ENCODE measurements at regions of chr6 and their contacts with region 1.

Region 1: GRCh38 chr6:148780918-148781436 is 34.1 kb downstream of the UST start:
- DNase-seq: peak; percentile 49
- H3K4me3 Mint-ChIP-seq: peak overlapping the region; percentile 52
- H3K27ac Mint-ChIP-seq: peak overlapping the region; percentile 78
- H3K4me1 Mint-ChIP-seq: peaks cover 36% of the 10 kb centered on the region
- H3K27me3 Mint-ChIP-seq: no peaks in the 10 kb centered on the region

Region 2: DNA sequence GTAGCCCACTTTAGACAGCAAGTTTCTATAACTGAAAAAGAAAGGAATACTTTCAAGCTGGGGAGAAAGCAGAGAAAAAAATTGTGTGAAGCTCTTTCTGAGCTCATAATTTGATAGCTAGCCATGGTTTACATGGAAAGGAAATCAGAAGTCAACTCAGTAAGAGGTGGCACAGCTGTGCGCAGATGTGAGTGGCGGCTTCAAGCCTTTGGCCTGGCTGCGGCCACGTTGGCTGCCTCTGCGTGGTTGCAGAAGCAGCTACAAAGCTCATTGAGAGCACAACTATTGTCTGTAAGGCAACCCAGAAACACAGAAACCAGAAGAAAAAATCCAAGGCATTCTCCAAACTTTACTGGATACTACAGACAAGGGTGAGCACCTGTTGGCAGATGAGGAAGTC is 301.5 kb before region 1 on chr6:
- CTCF ChIA-PET with region 1: no interaction called
- POLR2A ChIA-PET with region 1: no interaction called
- intact Hi-C with region 1: no loop called
- DNase-seq: no peak
- H3K4me3 Mint-ChIP-seq: no peak overlapping the region
- H3K27ac Mint-ChIP-seq: no peak overlapping the region
- H3K4me1 Mint-ChIP-seq: no peaks in the 10 kb centered on the region
- H3K27me3 Mint-ChIP-seq: peaks cover 5% of the 10 kb centered on the region

Region 3: DNA sequence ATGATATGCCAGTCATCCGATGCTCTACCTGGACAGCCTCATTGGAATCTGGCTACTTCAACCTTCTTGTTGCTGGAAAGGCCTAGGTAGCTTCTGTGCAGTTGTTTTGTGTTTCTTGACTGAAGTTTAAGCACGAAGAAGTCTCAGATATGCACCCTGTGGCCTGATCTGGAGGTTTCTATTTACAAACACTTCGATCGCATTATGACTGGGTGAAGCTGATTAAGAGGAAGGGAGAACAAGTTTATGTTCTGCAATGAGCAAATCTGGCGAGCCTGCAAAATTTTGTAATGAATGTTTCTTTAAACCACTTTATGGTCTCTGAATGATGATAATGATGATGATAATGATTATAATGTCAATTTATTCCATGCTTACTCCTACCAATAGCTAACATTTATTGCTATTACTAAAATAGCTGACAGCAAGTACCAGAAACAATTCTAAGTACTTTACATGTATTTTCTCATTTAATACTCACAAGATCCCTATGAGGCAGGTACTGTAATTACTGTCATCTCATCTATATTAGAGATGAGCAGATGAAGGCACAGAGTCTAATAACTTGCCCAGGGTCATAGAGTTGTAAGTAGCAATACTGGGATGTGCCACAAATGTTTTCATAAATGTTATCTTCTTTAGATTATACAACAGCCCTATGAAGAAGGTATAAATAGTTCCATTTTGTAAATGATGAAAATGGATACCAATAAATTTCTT is 160.2 kb before region 1 on chr6:
- CTCF ChIA-PET with region 1: no interaction called
- POLR2A ChIA-PET with region 1: no interaction called
- intact Hi-C with region 1: no loop called
- DNase-seq: peak; percentile 9
- H3K4me3 Mint-ChIP-seq: no peak overlapping the region
- H3K27ac Mint-ChIP-seq: no peak overlapping the region
- H3K4me1 Mint-ChIP-seq: no peaks in the 10 kb centered on the region
- H3K27me3 Mint-ChIP-seq: peaks cover 9% of the 10 kb centered on the region

Region 4: GRCh38 chr6:148711833-148712654 is 68.9 kb before region 1 on chr6:
- CTCF ChIA-PET with region 1: no interaction called
- POLR2A ChIA-PET with region 1: no interaction called
- intact Hi-C with region 1: loop called (anchors 1 kb)
- DNase-seq: no peak
- H3K4me3 Mint-ChIP-seq: no peak overlapping the region
- H3K27ac Mint-ChIP-seq: peak overlapping the region; percentile 64
- H3K4me1 Mint-ChIP-seq: peaks cover 12% of the 10 kb centered on the region
- H3K27me3 Mint-ChIP-seq: peaks cover 5% of the 10 kb centered on the region

Region 5: DNA sequence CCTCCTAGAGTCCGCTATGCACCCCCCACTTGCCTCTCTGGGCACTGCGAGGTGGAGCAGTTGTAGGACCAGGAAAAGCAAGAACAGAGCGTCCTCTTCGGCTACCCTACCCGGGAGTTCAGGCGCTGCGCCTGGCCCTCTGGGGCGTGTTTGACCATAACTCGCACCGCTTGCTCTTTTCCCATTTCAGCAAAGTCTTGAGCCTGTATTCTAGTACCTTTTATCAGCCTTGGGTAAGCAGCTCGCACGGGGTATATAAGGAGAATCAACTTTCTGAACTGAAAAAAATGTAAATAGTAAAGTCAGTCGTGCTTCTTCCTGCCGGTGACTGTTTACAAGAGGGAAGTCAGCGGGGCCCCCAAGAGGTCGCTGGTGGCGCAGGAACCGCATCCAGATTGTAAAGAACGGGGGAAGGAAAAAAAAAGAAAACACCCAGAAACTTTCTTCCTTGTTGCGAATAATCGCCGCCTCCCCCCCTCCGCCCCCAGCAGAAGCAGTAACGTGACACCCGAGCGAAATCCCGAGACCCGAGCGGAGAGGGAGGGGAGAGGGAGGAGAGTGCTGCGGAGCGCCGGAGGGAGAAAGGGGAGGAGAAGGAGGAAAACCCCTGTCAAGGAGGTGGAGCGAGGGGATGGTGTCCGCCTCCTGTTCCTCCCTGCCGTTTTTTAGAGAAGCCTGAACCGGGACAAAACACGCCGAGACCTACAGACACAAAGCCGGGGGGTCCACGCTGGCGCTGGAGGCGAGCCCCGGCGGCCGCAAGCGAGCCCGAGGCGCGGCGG is 34.4 kb before region 1 on chr6 and contains the start of gene UST:
- CTCF ChIA-PET with region 1: no interaction called
- POLR2A ChIA-PET with region 1: no interaction called
- intact Hi-C with region 1: loop called (anchors 5 kb)
- DNase-seq: peak; percentile 79
- H3K4me3 Mint-ChIP-seq: peak within 1 kb of the TSS; percentile 88
- H3K27ac Mint-ChIP-seq: peak within 1 kb of the TSS; percentile 78
- H3K4me1 Mint-ChIP-seq: peaks cover 28% of the 10 kb centered on the region
- H3K27me3 Mint-ChIP-seq: peaks cover 8% of the 10 kb centered on the region
- total RNA-seq, gene UST: 3.7 to 4.9 TPM

Region 6: DNA sequence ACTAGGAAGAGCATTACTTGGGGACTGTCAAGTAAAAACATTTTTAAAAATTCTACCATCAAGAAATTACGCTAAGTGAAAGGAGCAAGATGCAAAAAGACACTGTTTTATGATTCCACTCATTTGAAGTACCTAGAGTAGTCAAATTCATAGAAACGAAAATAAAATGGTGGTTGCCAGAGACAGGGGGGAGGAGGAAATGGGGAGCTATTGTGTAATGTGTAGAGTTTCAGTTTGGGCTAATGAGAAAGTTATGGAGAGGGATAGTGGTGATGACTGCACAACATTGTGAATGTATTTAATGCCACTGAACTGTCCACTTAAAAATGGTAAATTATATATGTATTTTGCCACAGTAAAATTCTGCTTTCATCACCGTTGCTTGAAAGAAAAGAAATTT is 49.6 kb after region 1 on chr6:
- CTCF ChIA-PET with region 1: interaction called, 4 read pairs
- POLR2A ChIA-PET with region 1: interaction called, 6 read pairs
- intact Hi-C with region 1: loop called (anchors 1 kb)
- DNase-seq: peak; percentile 28
- H3K4me3 Mint-ChIP-seq: peak overlapping the region; percentile 71
- H3K27ac Mint-ChIP-seq: peak overlapping the region; percentile 26
- H3K4me1 Mint-ChIP-seq: peaks cover 44% of the 10 kb centered on the region
- H3K27me3 Mint-ChIP-seq: peaks cover 5% of the 10 kb centered on the region

Region 7: DNA sequence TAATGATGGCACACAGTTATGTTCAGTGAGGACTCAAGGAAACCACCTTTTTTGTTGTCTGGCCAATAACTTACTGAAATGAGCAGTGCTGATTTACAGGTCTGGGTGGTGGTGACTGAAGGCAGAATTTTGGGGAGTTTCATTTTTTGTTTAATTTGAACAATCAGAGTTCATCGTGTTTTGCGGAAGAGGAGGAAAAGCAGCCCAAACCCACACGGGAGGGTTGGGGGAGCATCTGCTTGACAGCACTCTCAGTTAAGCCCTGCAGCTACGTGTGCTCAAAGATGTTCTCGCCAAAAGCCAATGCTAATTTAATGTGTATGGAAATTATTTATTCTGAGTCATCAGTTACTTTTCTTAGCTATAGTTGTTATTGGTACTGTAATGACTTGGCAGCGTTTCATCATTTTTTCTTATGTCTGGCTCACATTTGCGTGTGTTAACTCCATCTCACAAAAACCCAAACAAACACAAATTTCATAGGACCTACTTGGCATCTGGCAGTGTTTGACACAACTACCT is 55.0 kb after region 1 on chr6:
- CTCF ChIA-PET with region 1: interaction called, 4 read pairs
- POLR2A ChIA-PET with region 1: interaction called, 6 read pairs
- intact Hi-C with region 1: loop called (anchors 1 kb)
- DNase-seq: peak; percentile 71
- H3K4me3 Mint-ChIP-seq: peak overlapping the region; percentile 36
- H3K27ac Mint-ChIP-seq: peak overlapping the region; percentile 79
- H3K4me1 Mint-ChIP-seq: peaks cover 49% of the 10 kb centered on the region
- H3K27me3 Mint-ChIP-seq: peaks cover 5% of the 10 kb centered on the region

Region 8: DNA sequence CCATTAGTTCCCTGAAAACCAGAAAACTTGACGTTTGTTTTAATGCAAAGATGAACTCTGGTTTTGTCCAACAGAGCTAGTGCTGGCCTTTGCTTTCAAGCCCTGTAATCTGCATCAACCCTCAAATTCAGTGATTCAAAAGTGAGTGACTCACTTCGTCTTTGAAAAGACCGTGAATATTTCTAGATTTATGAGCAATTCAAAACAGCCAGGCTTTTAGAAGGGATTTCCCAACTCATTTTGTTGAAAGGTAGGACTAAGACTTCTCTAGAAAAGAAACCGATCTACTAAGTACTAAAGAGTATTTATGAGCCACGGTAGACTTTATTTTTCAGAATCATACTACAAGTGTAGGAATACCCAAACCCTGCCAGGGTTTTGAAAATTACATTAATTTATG is 87.3 kb after region 1 on chr6:
- CTCF ChIA-PET with region 1: interaction called, 3 read pairs
- POLR2A ChIA-PET with region 1: no interaction called
- intact Hi-C with region 1: loop called (anchors 1 kb)
- DNase-seq: no peak
- H3K4me3 Mint-ChIP-seq: peak overlapping the region; percentile 23
- H3K27ac Mint-ChIP-seq: peak overlapping the region; percentile 88
- H3K4me1 Mint-ChIP-seq: peaks cover 55% of the 10 kb centered on the region
- H3K27me3 Mint-ChIP-seq: no peaks in the 10 kb centered on the region

Region 9: DNA sequence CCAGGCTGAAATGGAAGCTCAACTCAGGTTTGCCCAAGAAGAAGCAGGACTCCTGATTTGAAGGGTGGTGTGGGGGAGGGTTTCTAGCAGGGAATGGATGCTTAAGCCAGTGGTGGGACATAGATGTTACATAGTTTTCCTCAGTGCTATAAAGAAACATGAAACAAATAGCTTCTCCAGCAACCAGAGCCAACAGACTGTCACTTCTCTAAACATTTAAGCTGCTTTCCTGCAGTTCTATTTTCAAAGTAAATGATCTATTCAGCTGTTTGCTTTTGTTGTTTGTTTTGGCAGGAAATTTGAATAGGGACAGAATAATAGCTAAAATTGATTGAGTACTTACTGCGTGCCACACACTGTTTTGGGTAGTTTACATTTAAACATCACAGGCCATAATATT is 134.8 kb after region 1 on chr6:
- CTCF ChIA-PET with region 1: no interaction called
- POLR2A ChIA-PET with region 1: no interaction called
- intact Hi-C with region 1: no loop called
- DNase-seq: no peak
- H3K4me3 Mint-ChIP-seq: no peak overlapping the region
- H3K27ac Mint-ChIP-seq: no peak overlapping the region
- H3K4me1 Mint-ChIP-seq: peaks cover 5% of the 10 kb centered on the region
- H3K27me3 Mint-ChIP-seq: no peaks in the 10 kb centered on the region

Region 10: GRCh38 chr6:149393002-149393679 is 612.2 kb after region 1 on chr6:
- CTCF ChIA-PET with region 1: no interaction called
- POLR2A ChIA-PET with region 1: no interaction called
- intact Hi-C with region 1: no loop called
- DNase-seq: no peak
- H3K4me3 Mint-ChIP-seq: no peak overlapping the region
- H3K27ac Mint-ChIP-seq: peak overlapping the region; percentile 83
- H3K4me1 Mint-ChIP-seq: peaks cover 66% of the 10 kb centered on the region
- H3K27me3 Mint-ChIP-seq: no peaks in the 10 kb centered on the region